ENCODE measurements at regions of chr17 and their contacts with region 1.

Region 1: GRCh38 chr17:36545465-36546417 is 1.0 kb downstream of the GGNBP2 start:
- DNase-seq: peak; percentile 94 to 98
- H3K4me3 ChIP-seq: peak overlapping the region; percentile 73 to 95 (median 90)
- H3K27ac ChIP-seq: peak overlapping the region; percentile 78
- H3K4me1 ChIP-seq: peaks cover 0 to 5% (median 1%) of the 10 kb centered on the region in 4 experiments; a peak in 2 of 7 replicates
- H3K27me3 ChIP-seq: no peaks in the 10 kb centered on the region
- CTCF ChIP-seq: no peak
- EP300 ChIP-seq: peak; percentile 57 to 96; a peak in 2 of 3 replicates
- POLR2A ChIP-seq: peak; percentile 64 to 72
- RAD21 ChIP-seq: no peak

Region 2: GRCh38 chr17:36591434-36592315 is 45.9 kb after region 1 on chr17 and contains the start of gene DHRS11:
- CTCF ChIA-PET with region 1: no interaction called
- POLR2A ChIA-PET with region 1: interaction called, 22 read pairs
- DNase-seq: peak; percentile 46 to 91
- H3K4me3 ChIP-seq: peak within 1 kb of the TSS; percentile 52 to 93 (median 76)
- H3K27ac ChIP-seq: peak within 1 kb of the TSS; percentile 67
- H3K4me1 ChIP-seq: peaks cover 0 to 15% (median 11%) of the 10 kb centered on the region in 4 experiments; a peak in 5 of 7 replicates
- H3K27me3 ChIP-seq: no peaks in the 10 kb centered on the region
- CTCF ChIP-seq: no peak
- EP300 ChIP-seq: no peak
- POLR2A ChIP-seq: peak in 1 of 2 experiments; percentile 73; a peak in 2 of 3 replicates
- RAD21 ChIP-seq: no peak
- total RNA-seq, gene DHRS11: 25.1 and 29.5 TPM in 2 replicates

Region 3: GRCh38 chr17:36674278-36674650 is 128.5 kb after region 1 on chr17:
- CTCF ChIA-PET with region 1: no interaction called
- POLR2A ChIA-PET with region 1: no interaction called
- DNase-seq: no peak
- H3K4me3 ChIP-seq: no peak overlapping the region
- H3K27ac ChIP-seq: no peak overlapping the region
- H3K4me1 ChIP-seq: peaks cover 0 to 3% (median 0%) of the 10 kb centered on the region in 4 experiments; a peak in 1 of 7 replicates
- H3K27me3 ChIP-seq: no peaks in the 10 kb centered on the region
- CTCF ChIP-seq: no peak
- EP300 ChIP-seq: no peak
- POLR2A ChIP-seq: no peak
- RAD21 ChIP-seq: no peak

Region 4: DNA sequence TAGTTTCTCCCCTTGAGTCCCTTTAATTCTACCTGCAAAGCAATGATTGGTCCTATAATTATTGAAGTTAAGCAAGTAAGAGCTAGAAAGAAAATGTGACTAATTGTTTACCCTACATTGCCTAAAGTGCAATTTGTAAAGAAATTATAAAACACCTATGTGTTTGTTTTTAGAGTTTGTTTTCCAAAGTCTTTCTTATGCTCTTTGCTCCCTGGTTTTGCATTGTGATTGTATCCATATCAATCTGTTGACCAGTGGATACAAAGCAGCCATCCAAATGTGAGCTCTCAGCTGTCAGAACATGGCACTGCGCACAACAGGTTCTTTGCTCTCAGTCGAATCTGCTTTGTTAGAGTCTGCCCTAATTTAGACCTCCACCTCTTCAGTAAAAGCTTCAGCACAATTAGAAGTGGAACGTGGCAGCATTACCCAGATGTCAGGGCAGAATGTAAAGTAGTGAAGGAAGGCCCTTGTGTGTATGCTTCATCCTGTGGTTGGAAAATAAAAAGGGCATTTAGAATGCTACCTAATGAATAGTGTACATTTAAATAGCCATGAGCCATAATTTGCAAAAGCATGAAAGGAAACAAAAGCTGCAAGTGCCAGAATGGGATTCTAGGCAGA is 473.5 kb after region 1 on chr17:
- CTCF ChIA-PET with region 1: no interaction called
- POLR2A ChIA-PET with region 1: no interaction called
- DNase-seq: no peak
- H3K4me3 ChIP-seq: no peak overlapping the region
- H3K27ac ChIP-seq: no peak overlapping the region
- H3K4me1 ChIP-seq: peaks cover 0 to 2% (median under 1%) of the 10 kb centered on the region in 4 experiments; a peak in 5 of 7 replicates
- H3K27me3 ChIP-seq: no peaks in the 10 kb centered on the region
- CTCF ChIP-seq: no peak
- EP300 ChIP-seq: no peak
- POLR2A ChIP-seq: no peak
- RAD21 ChIP-seq: no peak